ENCODE measurements at regions of chr3 and their contacts with region 1.

Region 1: GRCh38 chr3:58994746-58995330 is 55.0 kb downstream of the CFAP20DC start:
- DNase-seq: peak; percentile 83
- H3K4me3 Mint-ChIP-seq: no peak overlapping the region
- H3K27ac Mint-ChIP-seq: no peak overlapping the region
- H3K4me1 Mint-ChIP-seq: peaks cover 21% of the 10 kb centered on the region
- H3K27me3 Mint-ChIP-seq: no peaks in the 10 kb centered on the region
- CTCF ChIP-seq: peak; percentile 67

Region 2: GRCh38 chr3:58824285-58824684 is 170.6 kb before region 1 on chr3:
- CTCF ChIA-PET with region 1: interaction called, 4 read pairs
- POLR2A ChIA-PET with region 1: no interaction called
- intact Hi-C with region 1: loop called (anchors 2 kb)
- DNase-seq: peak; percentile 78
- H3K4me3 Mint-ChIP-seq: no peak overlapping the region
- H3K27ac Mint-ChIP-seq: no peak overlapping the region
- H3K4me1 Mint-ChIP-seq: no peaks in the 10 kb centered on the region
- H3K27me3 Mint-ChIP-seq: no peaks in the 10 kb centered on the region
- CTCF ChIP-seq: peak; percentile 77

Region 3: DNA sequence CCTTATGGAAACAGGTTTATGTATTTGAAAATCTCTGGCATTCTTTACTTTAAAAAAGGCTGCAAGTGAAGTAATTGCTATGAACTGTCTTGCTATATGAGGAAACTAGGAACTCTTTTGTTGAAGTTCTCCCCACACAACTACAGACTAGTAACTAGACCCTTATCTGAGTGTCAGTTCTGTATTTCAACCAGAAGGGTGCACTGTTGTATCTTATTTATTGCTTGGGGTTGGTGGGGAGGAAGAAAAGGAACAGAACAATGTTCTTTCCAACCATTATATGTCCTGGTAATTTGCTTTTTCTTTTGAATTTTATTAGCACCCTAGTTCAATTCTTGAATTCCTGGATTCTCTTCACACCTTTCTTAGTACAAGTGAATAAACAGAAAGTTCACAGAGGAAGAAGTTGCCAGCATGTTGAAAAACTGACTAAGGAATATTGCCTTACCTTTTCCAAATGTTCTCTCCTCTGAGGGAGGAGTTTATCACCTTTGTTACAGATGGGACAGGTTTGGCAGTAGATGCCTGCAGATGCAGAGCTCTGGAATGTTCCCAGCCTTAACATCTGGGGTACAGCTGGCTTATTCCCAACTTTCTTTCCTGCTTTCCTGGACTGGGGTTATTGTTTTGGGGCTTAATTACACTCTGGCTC is 217.4 kb after region 1 on chr3:
- CTCF ChIA-PET with region 1: interaction called, 6 read pairs
- POLR2A ChIA-PET with region 1: no interaction called
- intact Hi-C with region 1: loop called (anchors 2 kb)
- DNase-seq: peak; percentile 50
- H3K4me3 Mint-ChIP-seq: no peak overlapping the region
- H3K27ac Mint-ChIP-seq: no peak overlapping the region
- H3K4me1 Mint-ChIP-seq: peaks cover 5% of the 10 kb centered on the region
- H3K27me3 Mint-ChIP-seq: no peaks in the 10 kb centered on the region
- CTCF ChIP-seq: peak; percentile 70

Region 4: DNA sequence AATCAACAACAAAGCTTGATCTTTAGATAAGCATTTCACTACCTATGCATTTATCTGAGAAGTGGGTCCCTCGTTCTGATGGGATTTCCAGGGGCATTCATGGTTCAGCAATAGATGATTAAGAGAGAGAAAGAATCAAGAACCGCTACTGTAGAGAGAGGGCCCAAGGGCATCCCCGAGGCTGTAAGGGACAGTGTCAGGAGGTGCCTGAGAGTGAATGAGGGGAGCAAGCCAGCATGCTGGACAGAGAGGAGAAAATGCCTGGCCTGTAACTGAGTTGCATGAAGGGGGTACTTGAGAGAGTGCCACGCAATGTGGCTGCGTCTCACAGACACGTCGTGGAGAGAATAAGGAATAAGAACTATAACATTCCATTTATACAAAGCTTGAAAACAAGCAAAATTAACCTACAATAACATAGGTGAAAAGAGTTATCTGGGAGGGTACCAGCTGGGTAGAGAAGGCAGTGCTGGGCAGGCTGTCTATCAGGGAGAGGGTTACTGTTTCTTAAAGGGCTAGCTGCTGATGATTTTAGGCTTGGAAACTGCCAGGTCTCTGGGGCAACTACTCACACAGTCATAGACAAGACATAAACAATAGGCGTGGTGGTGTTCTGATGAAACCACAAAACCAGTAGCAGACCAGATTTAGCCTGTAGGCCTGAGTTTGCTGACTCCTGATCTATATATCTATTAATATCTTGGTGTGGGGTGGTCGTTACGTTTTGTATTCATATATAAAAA is 429.6 kb after region 1 on chr3:
- CTCF ChIA-PET with region 1: no interaction called
- POLR2A ChIA-PET with region 1: no interaction called
- intact Hi-C with region 1: loop called (anchors 5 kb)
- DNase-seq: peak; percentile 89
- H3K4me3 Mint-ChIP-seq: no peak overlapping the region
- H3K27ac Mint-ChIP-seq: peak overlapping the region; percentile 95
- H3K4me1 Mint-ChIP-seq: peaks cover 47% of the 10 kb centered on the region
- H3K27me3 Mint-ChIP-seq: no peaks in the 10 kb centered on the region
- CTCF ChIP-seq: no peak

Region 5: DNA sequence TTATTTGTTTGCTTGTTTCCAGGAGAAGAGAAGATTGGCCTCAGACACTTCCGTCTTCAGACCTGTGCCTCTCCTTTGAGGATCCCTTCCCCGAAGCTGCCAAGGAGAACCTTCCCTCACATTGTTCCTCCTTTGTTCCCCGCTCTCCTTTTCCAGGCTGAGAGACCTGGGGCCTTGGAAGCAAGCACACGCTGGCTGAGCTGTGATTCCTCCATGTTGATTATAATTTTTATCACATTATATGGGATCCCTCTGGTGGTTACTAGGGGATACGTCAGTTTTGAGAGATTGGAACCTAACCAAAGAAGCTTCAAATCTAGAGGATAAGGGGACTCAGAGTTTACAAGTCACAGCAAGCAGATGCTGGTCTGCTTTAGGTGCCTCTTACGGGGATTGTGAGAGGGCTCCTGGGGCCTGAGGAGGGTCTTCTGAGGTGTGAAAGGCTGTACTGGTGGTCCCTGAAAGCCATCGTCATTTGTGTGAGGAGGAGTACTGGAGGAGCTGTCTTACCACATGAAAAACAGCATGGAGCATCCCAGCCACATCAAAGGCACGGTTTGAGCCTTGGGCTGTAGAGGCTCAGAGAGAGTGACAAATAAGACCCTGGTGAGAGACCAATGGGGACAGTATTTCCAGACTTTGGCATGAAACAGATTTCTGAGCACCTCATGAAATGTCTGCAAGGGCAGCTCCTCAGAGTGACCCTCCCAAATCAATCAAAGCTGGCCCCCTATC is 815.0 kb after region 1 on chr3:
- CTCF ChIA-PET with region 1: interaction called, 8 read pairs
- POLR2A ChIA-PET with region 1: no interaction called
- intact Hi-C with region 1: loop called (anchors 10 kb)
- DNase-seq: peak; percentile 33
- H3K4me3 Mint-ChIP-seq: no peak overlapping the region
- H3K27ac Mint-ChIP-seq: peak overlapping the region; percentile 63
- H3K4me1 Mint-ChIP-seq: no peaks in the 10 kb centered on the region
- H3K27me3 Mint-ChIP-seq: no peaks in the 10 kb centered on the region
- CTCF ChIP-seq: peak; percentile 45

Measured in MCF 10A (cell line).